Right ventricle myocardium superior (tissue), 1 donor: ENCODE measurements at regions of chr20 and their contacts with region 1.

Region 1: GRCh38 chr20:2101865-2102584 is 398 bp downstream of the STK35 start:
- DNase-seq: peak; percentile 95
- ATAC-seq: peak; percentile 95

Region 2: GRCh38 chr20:1946762-1947534 is 155.1 kb before region 1 on chr20:
- intact Hi-C with region 1: no loop called
- DNase-seq: peak; percentile 67
- ATAC-seq: peak; percentile 18

Region 3: DNA sequence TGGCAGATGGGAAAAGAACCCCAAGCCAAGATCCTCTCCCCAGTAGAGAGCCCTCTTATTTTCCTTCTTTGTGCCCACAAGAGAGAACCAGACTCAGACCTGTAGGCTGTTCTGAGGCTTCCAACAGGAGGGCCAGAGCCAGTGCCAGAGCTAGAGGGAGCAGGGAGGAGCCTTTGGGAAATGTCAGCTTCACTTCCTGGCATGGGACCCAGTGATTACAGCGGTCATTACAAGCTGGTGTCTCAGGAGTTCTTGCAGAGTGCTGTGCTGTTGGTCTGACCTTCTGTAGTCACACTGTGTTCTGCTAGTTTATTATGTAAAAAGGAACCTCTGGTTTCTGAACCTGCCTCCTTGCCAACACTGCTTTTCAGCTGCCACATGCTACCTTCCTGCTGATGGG is 38.5 kb after region 1 on chr20:
- intact Hi-C with region 1: loop called (anchors 5 kb)
- DNase-seq: peak; percentile 85
- ATAC-seq: peak; percentile 91

Region 4: DNA sequence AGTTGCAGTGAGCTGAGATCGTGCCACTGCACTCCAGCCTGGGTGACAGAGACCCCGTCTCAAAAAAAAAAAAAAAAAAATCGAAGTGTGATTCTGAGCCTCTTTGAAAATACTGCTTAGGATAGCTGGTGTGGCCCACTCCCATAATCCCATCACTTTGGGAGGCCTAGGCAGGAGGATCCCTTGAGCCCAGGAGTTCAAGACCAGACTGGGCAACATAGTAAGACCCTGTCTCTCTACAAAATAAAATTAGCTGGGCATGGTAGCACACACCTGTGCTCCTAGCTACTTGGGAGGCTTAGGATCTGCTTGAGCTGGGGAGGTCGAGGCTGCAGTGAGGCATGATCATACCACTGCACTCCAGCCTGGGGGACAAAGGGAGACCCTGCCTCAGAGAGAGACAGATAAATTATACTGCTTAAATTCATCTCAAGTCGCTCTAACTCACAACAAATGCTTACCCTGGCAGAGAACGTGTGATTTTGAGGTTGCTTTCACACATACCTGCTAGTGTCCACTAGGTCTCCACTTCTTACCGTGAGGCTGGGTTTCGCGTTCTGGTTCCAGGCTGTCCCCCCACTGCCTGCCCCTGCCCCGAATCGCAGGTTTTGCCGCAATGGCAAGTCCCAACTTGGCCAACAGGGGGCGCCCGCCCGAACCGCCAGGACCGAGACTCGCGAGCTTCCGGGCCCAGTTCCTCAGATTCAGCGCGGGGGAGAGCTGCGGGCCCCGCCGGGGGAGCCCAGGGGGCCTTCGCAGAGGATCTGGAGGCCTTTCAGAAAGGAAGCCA is 422.1 kb after region 1 on chr20:
- intact Hi-C with region 1: no loop called
- DNase-seq: peak; percentile 92
- ATAC-seq: peak; percentile 87